ENCODE measurements at regions of chr4 and their contacts with region 1.

Region 1: GRCh38 chr4:38730830-38731646 is 51.8 kb downstream of the TLR10 start:
- DNase-seq: peak; percentile 79 to 89
- ATAC-seq: peak; percentile 65 to 76 (median 75)
- H3K4me3 ChIP-seq: no peak overlapping the region
- H3K4me3 Mint-ChIP-seq: no peak overlapping the region
- H3K27ac ChIP-seq: no peak overlapping the region
- H3K27ac Mint-ChIP-seq: peak overlapping the region in 1 of 2 donors; percentile 61
- H3K4me1 ChIP-seq: peaks cover 22% of the 10 kb centered on the region
- H3K4me1 Mint-ChIP-seq: peaks cover 29 to 45% of the 10 kb centered on the region in 2 donors
- H3K27me3 ChIP-seq: peaks cover 2% of the 10 kb centered on the region
- H3K27me3 Mint-ChIP-seq: peaks cover 3 to 11% of the 10 kb centered on the region in 2 donors
- CTCF ChIP-seq: peak; percentile 98

Region 2: DNA sequence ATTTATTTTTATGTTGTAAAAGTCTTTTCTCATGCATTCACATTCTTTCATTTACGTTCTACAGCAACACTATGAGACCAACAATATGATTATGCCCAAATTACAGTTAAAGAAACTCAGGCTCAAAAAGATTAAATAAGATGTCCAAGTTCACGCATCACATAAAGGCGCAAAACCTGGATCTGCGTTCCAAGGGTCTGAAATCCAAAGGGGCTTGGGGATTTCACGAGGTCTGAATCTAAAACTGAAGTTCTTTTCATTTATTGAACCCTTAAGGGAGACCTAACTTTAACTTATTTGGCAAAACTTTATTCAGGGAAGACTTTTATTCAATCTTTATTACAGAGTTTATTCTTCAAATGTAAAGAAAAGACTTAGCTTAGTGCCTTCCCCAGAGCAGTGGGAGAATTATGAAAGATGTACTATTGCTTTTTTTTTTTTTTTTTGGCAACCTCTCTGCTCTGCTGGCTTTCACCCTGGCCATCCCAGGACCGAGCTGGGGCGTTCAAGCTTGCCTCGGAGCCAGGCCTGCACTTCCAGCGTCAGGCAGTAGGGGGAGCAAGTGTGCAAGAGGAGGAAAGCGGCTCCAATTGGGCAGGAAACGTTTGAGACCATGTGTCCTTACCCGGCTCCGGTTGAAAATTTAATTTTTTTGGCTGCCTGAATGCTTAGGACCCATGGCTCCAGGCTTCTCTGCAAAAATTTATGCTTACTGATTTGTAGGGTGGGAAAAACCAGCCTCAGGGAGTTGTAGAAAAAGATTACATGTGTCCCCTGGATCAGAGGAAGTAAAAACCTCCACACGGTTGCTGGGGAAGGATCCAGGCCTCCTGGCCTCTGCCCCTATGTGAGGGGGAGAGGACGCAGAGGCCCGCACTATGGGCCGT is 411.3 kb before region 1 on chr4:
- intact Hi-C with region 1: loop called (anchors 1 kb)
- DNase-seq: peak; percentile 87 to 92
- ATAC-seq: peak; percentile 84 to 90 (median 87)
- H3K4me3 ChIP-seq: peak overlapping the region; percentile 33
- H3K4me3 Mint-ChIP-seq: peak overlapping the region; percentile 88
- H3K27ac ChIP-seq: peak overlapping the region; percentile 84
- H3K27ac Mint-ChIP-seq: peak overlapping the region; percentile 86 to 91
- H3K4me1 ChIP-seq: peaks cover 26% of the 10 kb centered on the region
- H3K4me1 Mint-ChIP-seq: peaks cover 26 to 34% of the 10 kb centered on the region in 2 donors
- H3K27me3 ChIP-seq: no peaks in the 10 kb centered on the region
- H3K27me3 Mint-ChIP-seq: no peaks in the 10 kb centered on the region
- CTCF ChIP-seq: peak; percentile 94